T-cell (primary cell): ENCODE measurements at regions of chr7 and their contacts with region 1.

Region 1: GRCh38 chr7:36514289-36515243 is 124.9 kb downstream of the ANLN start:
- DNase-seq: no peak
- ATAC-seq: no peak
- H3K4me3 ChIP-seq: no peak overlapping the region
- H3K4me3 Mint-ChIP-seq: no peak overlapping the region
- H3K27ac ChIP-seq: no peak overlapping the region
- H3K27ac Mint-ChIP-seq: no peak overlapping the region
- H3K4me1 ChIP-seq: peaks cover 0 to 4% of the 10 kb centered on the region in 2 experiments
- H3K4me1 Mint-ChIP-seq: peaks cover 6 to 17% (median 11%) of the 10 kb centered on the region in 3 donors
- H3K27me3 ChIP-seq: no peaks in the 10 kb centered on the region
- H3K27me3 Mint-ChIP-seq: no peaks in the 10 kb centered on the region

Region 2: GRCh38 chr7:36629351-36629750 is 114.8 kb after region 1 on chr7:
- CTCF ChIA-PET with region 1: no interaction called
- POLR2A ChIA-PET with region 1: interaction called in 1 of 2 experiments, 11 read pairs
- DNase-seq: no peak
- ATAC-seq: no peak
- H3K4me3 ChIP-seq: no peak overlapping the region
- H3K4me3 Mint-ChIP-seq: no peak overlapping the region
- H3K27ac ChIP-seq: no peak overlapping the region
- H3K27ac Mint-ChIP-seq: no peak overlapping the region
- H3K4me1 ChIP-seq: peaks cover 0 to 7% of the 10 kb centered on the region in 2 experiments
- H3K4me1 Mint-ChIP-seq: peaks cover 12 to 20% (median 14%) of the 10 kb centered on the region in 3 donors
- H3K27me3 ChIP-seq: no peaks in the 10 kb centered on the region
- H3K27me3 Mint-ChIP-seq: no peaks in the 10 kb centered on the region